Sciatic nerve (tissue), 2 donors: ENCODE measurements at regions of chr2 and their contacts with region 1.

Region 1: DNA sequence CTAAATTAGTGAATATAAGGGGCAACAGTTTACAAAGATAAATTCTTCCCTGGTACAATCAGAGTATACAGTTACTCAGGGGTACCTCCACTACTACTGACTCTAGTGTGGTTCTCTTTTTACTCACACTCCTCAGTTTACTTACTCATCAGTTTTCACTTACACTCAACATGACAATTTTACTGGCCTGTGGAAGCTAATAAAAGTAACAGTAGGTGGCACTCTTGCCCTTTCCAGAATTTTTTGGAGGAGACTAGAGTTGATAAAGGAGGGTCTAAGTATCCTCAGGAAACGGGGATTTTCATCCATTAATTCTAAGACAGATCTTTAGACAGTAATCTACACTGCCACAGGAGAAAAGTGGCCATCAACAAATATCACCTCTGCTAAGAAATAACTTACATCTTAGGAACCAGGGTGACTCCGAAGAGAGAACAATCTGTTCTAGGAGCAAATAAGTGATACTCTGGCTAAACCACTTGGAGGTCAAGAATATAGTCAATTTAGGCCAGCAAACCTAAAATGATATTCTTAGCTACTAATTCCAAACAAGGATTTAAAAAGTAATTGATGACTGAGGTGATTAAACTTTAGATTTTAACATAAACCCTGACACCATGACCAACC is 61.3 kb downstream of the ATL2 start:
- DNase-seq: no peak
- ATAC-seq: peak; percentile 81

Region 2: GRCh38 chr2:38026846-38027245 is 289.0 kb before region 1 on chr2:
- intact Hi-C with region 1: no loop called
- DNase-seq: no peak
- ATAC-seq: no peak

Region 3: DNA sequence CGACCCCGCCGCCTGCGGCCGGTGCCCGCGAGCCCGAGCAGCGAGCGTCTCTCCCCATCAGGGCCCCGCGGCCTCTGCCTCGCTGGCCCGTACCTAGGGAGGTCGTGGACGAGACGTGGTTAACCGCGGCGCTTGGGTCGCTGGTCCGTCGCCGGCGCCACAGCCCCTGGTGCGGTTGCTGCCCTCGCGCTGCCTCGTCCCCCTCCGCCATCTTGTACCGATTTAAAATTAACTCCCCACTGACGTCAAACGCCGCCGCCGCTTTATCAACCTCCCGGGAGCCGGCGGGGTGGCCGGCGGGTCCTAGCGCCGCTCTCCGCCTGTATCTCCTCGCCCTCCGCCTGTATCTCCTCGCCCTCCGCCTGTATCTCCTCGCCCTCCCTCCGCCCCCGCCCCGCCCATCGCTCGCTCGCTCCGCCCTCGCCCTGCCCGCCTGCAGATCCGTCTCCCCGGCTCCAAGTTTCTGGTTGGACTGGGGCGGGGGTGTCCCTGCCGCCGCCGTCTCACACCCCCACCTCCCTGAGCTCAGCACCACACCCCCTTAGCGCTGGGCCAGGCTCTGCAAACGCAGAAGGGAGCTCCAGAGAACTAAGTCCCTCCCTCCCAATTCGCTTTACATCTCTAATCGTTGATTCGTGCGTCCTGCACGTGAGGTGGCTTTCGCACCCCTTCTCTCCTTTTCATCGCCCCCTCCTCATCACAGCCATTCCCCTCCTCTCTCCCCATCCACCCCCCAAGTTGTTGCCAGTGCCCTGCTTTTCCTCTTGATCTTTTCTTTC is 61.4 kb after region 1 on chr2 and contains the start of gene ATL2:
- intact Hi-C with region 1: loop called (anchors 2 kb)
- DNase-seq: peak; percentile 96
- ATAC-seq: peak; percentile 95
- total RNA-seq, gene ATL2: 54.5 TPM

Region 4: DNA sequence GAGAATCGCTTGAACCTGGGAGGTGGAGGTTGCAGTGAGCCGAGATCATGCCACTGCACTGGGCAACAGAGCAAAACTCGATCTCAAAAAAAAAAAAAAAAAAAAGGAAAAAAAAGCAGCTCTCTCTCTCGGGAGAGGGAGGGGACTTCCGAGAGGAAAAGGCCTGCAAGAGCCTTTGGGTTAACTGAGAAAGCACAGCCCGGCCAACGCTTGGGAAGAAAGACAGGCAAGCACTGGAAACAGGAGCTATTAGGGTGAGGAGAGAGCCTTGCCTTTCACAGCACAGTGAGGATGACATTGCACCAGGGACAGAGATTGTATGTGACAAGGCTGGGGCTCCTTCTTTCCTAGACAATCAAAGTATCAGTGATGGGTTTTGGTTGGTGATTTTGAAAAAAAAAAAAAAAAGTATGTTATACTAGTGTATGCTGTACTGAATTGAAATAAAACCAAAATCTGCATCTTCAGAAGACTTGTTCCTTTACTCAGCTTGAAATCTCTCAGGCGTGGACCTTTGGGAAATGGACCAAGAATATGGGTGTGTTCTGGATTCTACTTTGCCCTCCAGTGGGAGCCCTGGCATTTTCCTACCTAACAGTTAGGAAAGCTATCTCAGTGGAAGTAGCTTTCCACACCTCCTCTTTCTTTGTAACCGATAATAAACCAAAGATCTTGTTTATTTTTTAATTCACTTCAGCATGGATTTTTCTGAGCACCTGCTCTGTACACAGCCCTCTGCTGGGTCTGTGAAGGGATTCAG is 418.7 kb after region 1 on chr2:
- intact Hi-C with region 1: loop called (anchors 10 kb)
- DNase-seq: no peak
- ATAC-seq: no peak